ENCODE measurements at regions of chr2 and their contacts with region 1.

Region 1: DNA sequence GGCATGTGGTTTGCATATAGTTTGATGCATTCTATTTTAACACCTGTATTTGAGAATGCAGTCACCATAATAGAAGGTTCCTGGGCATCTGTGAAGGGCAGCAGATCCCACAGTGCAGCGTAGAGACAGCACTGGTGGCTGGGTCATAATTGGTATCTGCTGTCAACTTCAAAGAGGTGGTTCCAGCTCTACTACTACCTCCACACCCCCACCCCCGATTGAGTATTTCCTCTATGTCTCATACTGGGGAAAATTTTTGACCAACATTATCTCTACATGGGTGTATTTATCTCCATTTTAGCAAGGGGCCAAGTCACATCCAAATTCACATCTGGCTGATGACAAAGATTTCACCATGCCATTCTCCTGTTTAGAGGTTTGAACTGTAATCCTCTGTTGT is 43.0 kb downstream of the TRPM8 start:
- DNase-seq: no peak
- H3K4me3 ChIP-seq: no peak overlapping the region
- H3K4me3 Mint-ChIP-seq: no peak overlapping the region
- H3K27ac Mint-ChIP-seq: no peak overlapping the region
- H3K4me1 ChIP-seq: no peaks in the 10 kb centered on the region
- H3K4me1 Mint-ChIP-seq: no peaks in the 10 kb centered on the region
- H3K27me3 ChIP-seq: no peaks in the 10 kb centered on the region
- H3K27me3 Mint-ChIP-seq: no peaks in the 10 kb centered on the region
- CTCF ChIP-seq: no peak

Region 2: GRCh38 chr2:231985823-231986261 is 1974.4 kb before region 1 on chr2:
- CTCF ChIA-PET with region 1: no interaction called
- POLR2A ChIA-PET with region 1: interaction called, 11 read pairs
- intact Hi-C with region 1: no loop called
- DNase-seq: peak; percentile 3 to 39
- H3K4me3 ChIP-seq: no peak overlapping the region
- H3K4me3 Mint-ChIP-seq: peak overlapping the region; percentile 48
- H3K27ac Mint-ChIP-seq: no peak overlapping the region
- H3K4me1 ChIP-seq: no peaks in the 10 kb centered on the region
- H3K4me1 Mint-ChIP-seq: no peaks in the 10 kb centered on the region
- H3K27me3 ChIP-seq: no peaks in the 10 kb centered on the region
- H3K27me3 Mint-ChIP-seq: no peaks in the 10 kb centered on the region
- CTCF ChIP-seq: no peak

Region 3: DNA sequence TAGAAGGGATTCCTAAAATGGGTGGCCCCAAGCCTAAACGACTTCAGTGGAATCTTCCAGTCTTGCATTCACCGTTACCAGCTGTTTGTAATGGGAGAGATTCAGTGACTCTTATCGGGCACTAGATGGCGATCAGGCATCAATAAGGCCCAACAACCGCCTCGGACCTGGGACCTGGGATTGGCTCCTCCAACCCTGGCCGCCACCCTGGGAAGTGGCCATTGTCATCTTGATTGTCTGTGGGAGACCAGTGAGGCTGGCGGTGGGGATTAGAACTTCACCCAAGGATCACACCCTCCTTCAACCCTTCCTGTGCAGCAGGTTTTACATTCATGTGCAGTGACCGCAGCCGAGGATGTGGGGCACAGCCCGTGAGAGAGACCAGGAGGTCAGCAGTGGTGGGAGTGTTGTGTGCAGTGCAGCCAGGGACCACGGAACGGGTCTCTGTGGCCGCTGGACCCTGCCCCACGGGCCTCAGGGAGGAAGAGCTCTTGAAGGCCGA is 175.6 kb after region 1 on chr2:
- CTCF ChIA-PET with region 1: no interaction called
- POLR2A ChIA-PET with region 1: no interaction called
- intact Hi-C with region 1: no loop called
- DNase-seq: peak; percentile 83 to 91
- H3K4me3 ChIP-seq: peak overlapping the region; percentile 2; the same call in 1 of the 2 replicates
- H3K4me3 Mint-ChIP-seq: peak overlapping the region; percentile 57
- H3K27ac Mint-ChIP-seq: peak overlapping the region; percentile 87
- H3K4me1 ChIP-seq: peaks cover 28% of the 10 kb centered on the region
- H3K4me1 Mint-ChIP-seq: peaks cover 5% of the 10 kb centered on the region
- H3K27me3 ChIP-seq: no peaks in the 10 kb centered on the region
- H3K27me3 Mint-ChIP-seq: no peaks in the 10 kb centered on the region
- CTCF ChIP-seq: peak; percentile 59 to 70